ENCODE measurements at regions of chr1 and their contacts with region 1.

Region 1: GRCh38 chr1:41773144-41773591 is 145.6 kb downstream of the HIVEP3 start:
- DNase-seq: no peak
- ATAC-seq: no peak
- H3K4me3 Mint-ChIP-seq: no peak overlapping the region
- H3K27ac Mint-ChIP-seq: no peak overlapping the region
- H3K4me1 Mint-ChIP-seq: peaks cover 15% of the 10 kb centered on the region
- H3K27me3 Mint-ChIP-seq: no peaks in the 10 kb centered on the region
- CTCF ChIP-seq: no peak

Region 2: GRCh38 chr1:41758904-41759548 is 14.1 kb before region 1 on chr1:
- CTCF ChIA-PET with region 1: no interaction called
- POLR2A ChIA-PET with region 1: interaction called, 11 read pairs
- intact Hi-C with region 1: no loop called
- DNase-seq: no peak
- ATAC-seq: no peak
- H3K4me3 Mint-ChIP-seq: no peak overlapping the region
- H3K27ac Mint-ChIP-seq: no peak overlapping the region
- H3K4me1 Mint-ChIP-seq: peaks cover 16% of the 10 kb centered on the region
- H3K27me3 Mint-ChIP-seq: no peaks in the 10 kb centered on the region
- CTCF ChIP-seq: no peak